ENCODE measurements at regions of chr22 and their contacts with region 1.

Region 1: GRCh38 chr22:41204992-41205900 is at the start of gene L3MBTL2:
- DNase-seq: peak; percentile 98
- H3K4me3 Mint-ChIP-seq: peak within 1 kb of the TSS; percentile 97
- H3K27ac Mint-ChIP-seq: peak within 1 kb of the TSS; percentile 94
- H3K4me1 Mint-ChIP-seq: peaks cover 21% of the 10 kb centered on the region
- H3K27me3 Mint-ChIP-seq: peaks cover 12% of the 10 kb centered on the region
- total RNA-seq, gene L3MBTL2: 51.9 and 56.6 TPM in 2 replicates

Region 2: DNA sequence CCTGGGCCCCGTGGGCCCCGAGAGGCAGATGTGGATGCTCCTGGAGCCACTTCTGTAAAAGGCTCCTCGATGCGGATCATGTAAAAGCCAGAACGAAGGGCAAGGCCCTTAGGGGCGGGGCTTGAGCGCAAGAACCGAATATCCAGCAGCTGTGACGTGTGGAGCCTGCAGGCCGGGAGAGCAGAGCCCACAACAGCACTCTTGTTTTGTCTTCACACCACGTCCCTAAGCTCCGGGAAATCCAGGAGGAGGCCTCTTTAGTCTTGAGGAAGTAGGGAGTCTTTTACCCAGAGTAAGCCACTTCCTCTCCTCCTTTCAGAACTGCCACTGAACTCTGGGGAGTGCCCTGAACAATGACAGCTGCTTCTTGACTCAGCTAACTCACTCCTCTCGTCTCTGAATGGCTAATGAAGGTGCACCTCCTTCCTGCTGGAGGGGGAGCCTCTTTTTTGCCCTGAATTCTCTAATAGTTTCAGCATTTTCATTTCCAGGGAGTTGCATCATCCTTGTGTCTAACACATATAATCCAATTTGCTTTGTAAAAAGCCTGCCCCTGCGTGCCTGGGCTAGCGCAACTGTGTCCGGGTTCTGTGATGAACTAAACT is 12.4 kb after region 1 on chr22:
- intact Hi-C with region 1: loop called (anchors 1 kb)
- DNase-seq: peak; percentile 44
- H3K4me3 Mint-ChIP-seq: peak overlapping the region; percentile 59
- H3K27ac Mint-ChIP-seq: peak overlapping the region; percentile 75
- H3K4me1 Mint-ChIP-seq: peaks cover 28% of the 10 kb centered on the region
- H3K27me3 Mint-ChIP-seq: no peaks in the 10 kb centered on the region

Region 3: GRCh38 chr22:41468381-41469217 is 263.4 kb after region 1 on chr22 and contains the starts of genes ACO2 and PHF5A:
- intact Hi-C with region 1: loop called (anchors 2 kb)
- DNase-seq: peak; percentile 98
- H3K4me3 Mint-ChIP-seq: peak within 1 kb of the TSS; percentile 87
- H3K27ac Mint-ChIP-seq: peak within 1 kb of the TSS; percentile 99
- H3K4me1 Mint-ChIP-seq: peaks cover 22% of the 10 kb centered on the region
- H3K27me3 Mint-ChIP-seq: no peaks in the 10 kb centered on the region
- total RNA-seq, gene ACO2: 99.1 and 101 TPM in 2 replicates
- total RNA-seq, gene PHF5A: 83.7 and 96.8 TPM in 2 replicates